ENCODE measurements at regions of chr19 and their contacts with region 1.

Region 1: GRCh38 chr19:7636691-7637373 is at the start of gene STXBP2:
- DNase-seq: peak; percentile 97
- ATAC-seq: peak; percentile 92
- H3K4me3 Mint-ChIP-seq: peak within 1 kb of the TSS; percentile 86
- H3K27ac Mint-ChIP-seq: peak within 1 kb of the TSS; percentile 93
- H3K4me1 Mint-ChIP-seq: peaks cover 15% of the 10 kb centered on the region
- H3K27me3 Mint-ChIP-seq: no peaks in the 10 kb centered on the region
- total RNA-seq, gene STXBP2: 170 to 189 TPM

Region 2: GRCh38 chr19:7647666-7648065 is 10.8 kb after region 1 on chr19:
- POLR2A ChIA-PET with region 1: interaction called, 11 read pairs
- DNase-seq: no peak
- ATAC-seq: no peak
- H3K4me3 Mint-ChIP-seq: no peak overlapping the region
- H3K27ac Mint-ChIP-seq: no peak overlapping the region
- H3K4me1 Mint-ChIP-seq: peaks cover 6% of the 10 kb centered on the region
- H3K27me3 Mint-ChIP-seq: peaks cover 8% of the 10 kb centered on the region

Measured in activated naive CD8-positive, alpha-beta T cell treated with anti-CD3 and anti-CD28 coated beads, Interleukin-2, amount 10 ng/mL, durations not matched to agents 7 days and 5 days (primary cell).